Colonic mucosa (tissue), 4 donors: ENCODE measurements at regions of chr7 and their contacts with region 1.

Region 1: GRCh38 chr7:153835104-153835503 is 217.1 kb upstream of the DPP6 start:
- DNase-seq: no peak
- H3K4me3 ChIP-seq: no peak overlapping the region
- H3K27ac ChIP-seq: no peak overlapping the region
- H3K4me1 ChIP-seq: no peaks in the 10 kb centered on the region
- H3K27me3 ChIP-seq: no peaks in the 10 kb centered on the region
- CTCF ChIP-seq: no peak

Region 2: GRCh38 chr7:153370092-153370491 is 465.0 kb before region 1 on chr7:
- intact Hi-C with region 1: loop called (anchors 10 kb)
- DNase-seq: no peak
- H3K4me3 ChIP-seq: no peak overlapping the region
- H3K27ac ChIP-seq: no peak overlapping the region
- H3K4me1 ChIP-seq: no peaks in the 10 kb centered on the region
- H3K27me3 ChIP-seq: no peaks in the 10 kb centered on the region
- CTCF ChIP-seq: no peak

Region 3: DNA sequence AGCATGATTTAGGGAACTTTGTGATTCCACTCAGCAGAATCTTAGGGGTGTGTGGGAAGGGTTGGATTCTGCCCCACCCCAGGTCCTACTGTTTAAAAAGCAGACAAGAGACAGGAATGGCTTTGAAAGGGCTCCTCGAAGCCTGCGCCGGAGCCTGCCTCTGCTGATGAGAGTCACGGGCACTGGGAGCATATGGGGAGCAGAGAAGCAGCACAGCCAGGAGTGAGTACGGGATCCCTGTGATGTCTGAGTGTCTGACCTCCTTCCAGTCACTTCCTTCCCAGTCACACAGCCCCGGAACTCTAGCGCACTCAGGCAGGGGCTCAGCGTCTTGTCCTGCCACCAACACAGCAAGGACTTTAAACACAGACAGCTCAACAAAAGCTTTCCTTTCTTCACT is 297.8 kb before region 1 on chr7:
- intact Hi-C with region 1: no loop called
- DNase-seq: no peak
- H3K4me3 ChIP-seq: no peak overlapping the region
- H3K27ac ChIP-seq: no peak overlapping the region
- H3K4me1 ChIP-seq: no peaks in the 10 kb centered on the region
- H3K27me3 ChIP-seq: no peaks in the 10 kb centered on the region
- CTCF ChIP-seq: no peak